AG04450 (cell line): ENCODE measurements at regions of chr2 and their contacts with region 1.

Region 1: DNA sequence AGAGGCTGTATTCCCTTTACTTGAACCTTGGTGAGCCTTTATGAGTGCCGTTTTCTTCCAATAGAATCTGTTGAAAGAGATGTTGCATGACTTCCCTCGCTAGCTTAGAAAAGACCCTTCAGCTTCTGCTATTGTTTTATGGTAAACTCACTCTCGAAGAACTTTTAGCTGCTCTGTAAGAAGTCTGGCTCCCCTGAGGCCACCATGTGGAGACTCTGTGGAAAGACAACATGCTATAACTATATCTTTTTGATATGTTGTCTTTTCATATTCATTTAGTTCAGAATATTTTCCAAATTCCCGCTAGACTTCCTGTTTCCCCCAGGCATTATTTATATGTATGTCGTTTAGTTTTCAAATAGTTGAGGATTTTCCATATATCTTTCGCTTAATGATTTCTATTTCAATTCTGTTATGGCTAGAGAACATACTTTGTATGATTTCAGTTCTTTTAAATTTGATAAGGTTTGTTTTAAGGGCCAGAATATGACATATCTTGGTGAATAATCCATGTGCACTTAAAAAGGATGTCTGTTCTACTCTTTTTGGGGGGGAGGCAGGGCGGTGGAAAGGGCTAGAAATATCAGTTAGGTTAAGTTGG is 64.1 kb downstream of the PTPN4 start:
- DNase-seq: no peak
- H3K4me3 ChIP-seq: no peak overlapping the region
- H3K27ac ChIP-seq: no peak overlapping the region
- H3K27me3 ChIP-seq: no peaks in the 10 kb centered on the region
- CTCF ChIP-seq: peak; percentile 81

Region 2: DNA sequence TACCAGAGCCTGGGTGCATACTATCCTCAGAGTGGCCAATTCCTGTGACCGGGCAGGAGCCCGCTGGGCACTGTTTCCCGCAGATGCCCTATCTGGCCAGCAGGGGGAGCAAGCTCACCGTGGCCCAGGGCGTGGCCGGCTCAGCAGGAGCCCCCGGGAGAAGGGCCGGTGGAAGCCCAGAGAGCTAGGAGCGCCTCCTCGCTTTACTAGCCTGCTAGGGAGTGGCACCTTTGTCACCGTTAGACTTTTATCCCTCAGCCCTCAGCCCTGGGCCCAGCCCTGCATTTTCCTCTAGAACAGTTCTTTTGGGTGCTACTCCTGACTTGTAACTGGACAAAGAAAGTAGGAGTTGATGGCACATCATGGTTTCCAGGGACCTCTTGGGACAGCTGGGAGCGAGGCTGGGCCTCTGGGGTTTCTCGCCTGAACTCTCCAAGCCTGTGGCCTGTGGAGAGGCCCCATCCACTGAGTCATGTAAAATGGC is 120.9 kb before region 1 on chr2:
- CTCF ChIA-PET with region 1: interaction called, 13 read pairs
- POLR2A ChIA-PET with region 1: no interaction called
- DNase-seq: no peak
- H3K4me3 ChIP-seq: no peak overlapping the region
- H3K27ac ChIP-seq: no peak overlapping the region
- H3K27me3 ChIP-seq: peaks cover 12% of the 10 kb centered on the region
- CTCF ChIP-seq: peak; percentile 98

Region 3: DNA sequence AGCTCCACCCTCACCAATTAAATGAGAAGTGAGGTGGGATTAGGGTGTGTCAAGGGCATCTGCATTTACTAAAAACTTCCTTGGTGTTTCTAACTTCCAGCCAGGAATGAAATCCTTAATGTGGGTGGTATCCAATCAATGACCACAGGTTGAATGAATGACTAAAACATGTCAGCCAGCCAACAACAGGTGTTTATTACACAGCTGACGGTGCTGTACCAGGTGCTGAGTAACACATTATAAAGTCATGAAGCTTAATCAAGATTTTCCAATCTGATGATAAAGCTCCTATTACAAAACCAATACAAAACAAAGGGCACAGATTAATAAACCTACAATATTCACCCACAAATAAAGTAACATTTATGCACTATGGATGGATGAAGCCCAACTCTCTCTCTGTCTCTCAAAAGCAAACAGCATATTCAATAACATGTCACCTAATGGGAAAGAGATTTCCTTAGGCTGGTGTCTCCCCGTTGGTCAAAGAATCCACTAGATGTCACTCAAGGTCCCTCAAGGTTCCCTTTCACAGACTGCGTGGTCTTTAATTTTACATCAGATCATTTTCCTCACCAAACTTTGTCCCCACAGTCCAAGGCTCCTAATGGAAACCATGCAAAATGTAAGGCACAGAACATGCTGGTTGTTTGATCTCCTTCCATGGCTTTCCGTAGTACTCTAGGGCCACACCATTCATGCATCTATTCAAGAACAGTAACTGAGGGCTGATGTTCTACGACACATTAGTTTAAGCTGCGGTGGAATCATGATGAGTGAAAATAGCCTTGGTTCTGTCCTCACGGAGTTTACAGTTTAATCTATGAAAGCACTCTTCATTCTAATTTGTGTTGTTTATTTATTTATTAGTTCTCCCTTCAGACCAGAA is 70.5 kb before region 1 on chr2:
- CTCF ChIA-PET with region 1: interaction called, 14 read pairs
- POLR2A ChIA-PET with region 1: interaction called, 4 read pairs
- DNase-seq: no peak
- H3K4me3 ChIP-seq: no peak overlapping the region
- H3K27ac ChIP-seq: no peak overlapping the region
- H3K27me3 ChIP-seq: no peaks in the 10 kb centered on the region
- CTCF ChIP-seq: peak; percentile 66

Region 4: GRCh38 chr2:119809339-119810048 is 14.3 kb before region 1 on chr2:
- CTCF ChIA-PET with region 1: interaction called, 10 read pairs
- POLR2A ChIA-PET with region 1: no interaction called
- DNase-seq: peak; percentile 30
- H3K4me3 ChIP-seq: no peak overlapping the region
- H3K27ac ChIP-seq: no peak overlapping the region
- H3K27me3 ChIP-seq: no peaks in the 10 kb centered on the region
- CTCF ChIP-seq: no peak